AG04449 (cell line): ENCODE measurements at regions of chr7 and their contacts with region 1.

Region 1: GRCh38 chr7:73726083-73726466 is 6.6 kb upstream of the STX1A start:
- DNase-seq: no peak
- H3K4me3 ChIP-seq: no peak overlapping the region
- CTCF ChIP-seq: no peak

Region 2: DNA sequence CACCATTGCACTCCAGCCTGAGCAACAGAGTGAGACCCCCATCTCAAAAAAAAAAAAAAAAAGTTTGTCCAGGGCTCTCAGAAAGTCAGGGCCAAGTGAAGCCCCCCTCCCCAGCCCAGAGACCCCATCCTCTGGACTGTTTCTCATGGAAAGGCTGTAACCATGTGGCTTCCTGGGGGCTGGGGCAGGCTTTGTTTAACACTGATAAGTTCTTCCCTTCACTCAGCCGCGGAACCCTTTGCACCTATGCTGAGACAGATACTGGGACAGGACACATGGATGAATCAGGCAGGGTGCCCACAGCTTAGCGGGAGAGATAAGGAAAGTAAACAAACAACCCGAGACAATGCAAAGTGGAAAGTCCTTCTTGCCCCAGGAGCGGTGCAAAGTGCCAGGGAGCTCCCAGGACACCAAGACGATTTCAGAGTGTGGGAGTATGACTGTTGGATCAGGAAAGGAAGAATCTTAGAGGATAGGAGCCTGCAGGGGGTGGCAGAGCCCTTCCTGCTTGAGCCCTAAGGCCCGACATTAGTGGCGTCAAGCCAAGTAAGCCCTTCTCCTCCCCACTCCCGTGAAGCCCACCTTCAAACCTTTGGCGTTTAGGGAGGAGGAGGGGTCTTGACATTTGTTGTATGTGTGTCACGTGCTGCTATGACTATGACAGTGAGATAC is 113.3 kb before region 1 on chr7:
- CTCF ChIA-PET with region 1: interaction called, 231 read pairs
- POLR2A ChIA-PET with region 1: no interaction called
- DNase-seq: no peak
- H3K4me3 ChIP-seq: no peak overlapping the region
- CTCF ChIP-seq: no peak

Region 3: DNA sequence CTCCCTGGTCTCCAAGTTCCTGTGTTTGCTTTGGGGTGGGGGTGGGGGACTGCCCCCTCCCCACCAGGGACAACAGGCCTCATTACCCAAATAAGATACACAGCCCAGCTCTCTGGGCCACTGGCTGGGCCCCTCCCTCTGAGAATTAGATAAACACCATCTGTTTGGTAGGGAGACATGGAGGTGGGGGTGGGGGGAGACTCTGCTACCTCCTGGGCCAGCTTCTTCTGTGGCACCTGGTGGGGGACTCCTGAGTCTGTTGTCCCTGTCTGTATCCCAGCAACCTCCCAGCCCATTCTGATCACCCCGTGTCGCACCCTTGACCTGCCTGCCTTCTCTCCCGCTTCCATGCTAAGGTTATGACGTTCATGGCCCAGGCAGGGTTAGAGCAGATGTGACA is 107.5 kb before region 1 on chr7:
- CTCF ChIA-PET with region 1: interaction called, 32 read pairs
- POLR2A ChIA-PET with region 1: no interaction called
- DNase-seq: no peak
- H3K4me3 ChIP-seq: no peak overlapping the region
- CTCF ChIP-seq: no peak

Region 4: DNA sequence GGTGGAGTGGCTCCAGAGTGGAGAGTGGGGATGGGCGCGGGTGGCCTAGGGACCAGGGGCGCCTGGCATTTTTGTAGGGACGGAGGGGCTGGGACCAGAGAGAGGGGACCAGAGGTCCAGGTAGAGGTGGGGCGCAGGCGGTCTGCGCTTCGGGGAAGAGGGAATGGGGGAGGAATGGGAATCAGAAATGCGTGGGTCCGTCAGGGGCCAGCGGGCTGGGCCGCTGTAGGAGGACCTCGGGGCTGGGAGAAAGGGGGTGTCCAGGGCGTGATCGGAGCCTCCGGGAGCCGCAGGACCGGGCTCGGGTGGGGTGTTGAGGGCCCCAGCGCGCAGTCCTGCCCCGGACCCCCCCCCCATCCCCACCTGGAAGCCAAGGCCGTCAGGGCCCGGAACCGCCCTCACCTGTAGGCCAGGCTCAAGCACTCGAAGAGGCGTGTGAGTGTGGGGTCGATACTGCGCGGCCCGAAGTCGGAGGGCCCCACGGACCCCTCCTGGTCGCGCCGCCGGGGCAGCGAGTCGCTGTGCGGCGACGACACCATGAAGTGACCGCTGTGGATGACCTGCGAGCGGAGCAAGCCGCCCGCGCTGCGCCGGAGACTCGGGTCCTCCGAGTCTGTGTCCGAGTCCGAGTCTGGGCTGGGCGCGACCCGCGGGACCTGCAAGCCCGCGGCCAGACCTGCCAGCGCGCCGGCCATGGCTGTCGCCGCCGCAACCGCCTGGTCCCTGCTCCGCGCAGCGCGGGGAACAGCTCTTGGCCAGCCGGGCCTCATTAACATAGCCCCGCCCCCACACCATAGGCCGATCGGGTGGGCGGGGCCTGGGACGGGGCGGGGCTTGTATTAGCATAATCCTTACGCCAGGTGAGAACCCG is 102.0 kb before region 1 on chr7 and contains the start of gene MLXIPL:
- CTCF ChIA-PET with region 1: interaction called, 42 read pairs
- POLR2A ChIA-PET with region 1: no interaction called
- DNase-seq: no peak
- H3K4me3 ChIP-seq: peak within 1 kb of the TSS; percentile 41
- CTCF ChIP-seq: no peak

Region 5: GRCh38 chr7:73667344-73668102 is 58.6 kb before region 1 on chr7 and contains the start of gene VPS37D:
- CTCF ChIA-PET with region 1: interaction called, 13 read pairs
- POLR2A ChIA-PET with region 1: no interaction called
- DNase-seq: peak; percentile 3
- H3K4me3 ChIP-seq: peak within 1 kb of the TSS; percentile 72
- CTCF ChIP-seq: peak; percentile 84

Region 6: GRCh38 chr7:73701357-73701995 is 24.6 kb before region 1 on chr7:
- CTCF ChIA-PET with region 1: interaction called, 16 read pairs
- POLR2A ChIA-PET with region 1: interaction called, 3 read pairs
- DNase-seq: no peak
- H3K4me3 ChIP-seq: no peak overlapping the region
- CTCF ChIP-seq: peak; percentile 66

Region 7: GRCh38 chr7:73738612-73739374 is 12.7 kb after region 1 on chr7 and contains the start of gene ABHD11:
- CTCF ChIA-PET with region 1: interaction called, 42 read pairs
- POLR2A ChIA-PET with region 1: no interaction called
- DNase-seq: peak; percentile 61
- H3K4me3 ChIP-seq: peak within 1 kb of the TSS; percentile 93
- CTCF ChIP-seq: no peak

Region 8: DNA sequence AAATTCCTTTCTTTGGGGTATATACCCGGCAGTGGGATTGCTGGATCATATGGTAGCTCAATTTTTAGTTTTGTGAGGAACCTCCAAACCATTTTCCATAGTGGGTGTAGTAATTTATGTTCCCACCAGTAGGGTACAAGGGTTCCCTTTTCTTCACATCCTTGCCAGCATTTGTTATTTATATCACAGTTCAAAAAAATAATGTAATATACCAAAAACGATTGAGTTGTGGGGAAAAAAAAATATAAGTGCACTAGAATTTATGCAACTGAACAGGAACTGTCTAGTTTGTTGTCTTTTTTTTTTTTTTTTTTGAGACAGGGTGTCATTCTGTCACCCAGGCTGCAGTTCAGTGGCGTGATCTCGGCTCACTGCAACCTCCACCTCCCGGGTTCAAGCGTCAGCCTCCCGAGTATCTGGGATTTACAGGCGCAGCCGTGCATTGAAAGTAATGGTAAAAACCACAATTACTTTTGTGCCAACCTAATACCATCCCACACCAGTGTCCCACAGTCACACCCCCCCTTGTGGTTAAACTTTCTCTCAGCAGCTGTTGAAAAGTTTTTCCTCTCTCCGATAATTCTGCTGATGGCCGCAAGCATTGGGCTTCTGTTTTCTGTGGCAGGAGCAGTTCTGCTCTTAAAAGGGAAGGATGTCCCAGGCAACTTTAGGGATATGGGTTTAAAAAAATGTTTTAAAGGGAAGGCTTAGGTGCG is 476.9 kb after region 1 on chr7:
- CTCF ChIA-PET with region 1: no interaction called
- POLR2A ChIA-PET with region 1: no interaction called
- DNase-seq: no peak
- H3K4me3 ChIP-seq: no peak overlapping the region
- CTCF ChIP-seq: peak; percentile 62